ENCODE measurements at regions of chr2 and their contacts with region 1.

Region 1: GRCh38 chr2:101124643-101125366 is 26.4 kb downstream of the TBC1D8 start:
- DNase-seq: peak; percentile 86
- H3K4me3 Mint-ChIP-seq: peak overlapping the region; percentile 49
- H3K27ac Mint-ChIP-seq: peak overlapping the region; percentile 94
- H3K4me1 Mint-ChIP-seq: peaks cover 77% of the 10 kb centered on the region
- H3K27me3 Mint-ChIP-seq: no peaks in the 10 kb centered on the region
- CTCF ChIP-seq: no peak

Region 2: DNA sequence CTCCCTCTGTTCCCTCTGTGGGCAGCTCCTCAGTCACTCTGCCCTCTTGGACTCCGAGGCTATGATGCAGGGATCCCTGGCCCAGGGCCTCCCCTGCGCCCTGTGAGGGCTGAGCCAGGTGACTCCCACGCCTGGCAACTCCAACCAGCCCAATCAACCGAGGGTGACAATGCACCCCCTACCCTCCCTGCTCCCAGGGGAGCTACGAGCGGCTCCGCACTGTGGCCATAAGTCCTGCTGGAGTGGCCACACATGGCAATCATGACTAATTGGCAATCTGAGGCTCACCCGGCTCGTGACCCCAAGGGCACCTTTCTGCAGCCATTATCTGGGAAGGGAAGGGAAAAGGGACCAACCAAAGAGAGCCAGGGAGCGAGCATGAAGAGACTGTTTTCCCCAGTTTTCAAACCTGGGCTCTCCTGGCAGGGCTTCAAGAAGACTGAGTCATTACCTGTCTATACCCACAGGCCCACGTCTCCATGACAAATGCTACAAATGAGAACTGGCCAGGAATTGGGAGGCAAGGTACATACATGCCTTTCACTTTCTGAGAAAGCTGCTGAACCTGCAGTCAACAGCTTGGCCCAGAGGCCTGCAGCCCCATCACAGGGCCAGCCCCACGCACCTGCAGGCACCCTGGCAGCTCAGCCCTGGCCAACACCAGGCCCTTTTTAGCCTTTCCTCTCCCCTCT is 77.6 kb before region 1 on chr2:
- CTCF ChIA-PET with region 1: no interaction called
- intact Hi-C with region 1: loop called (anchors 1 kb)
- DNase-seq: peak; percentile 67
- H3K4me3 Mint-ChIP-seq: no peak overlapping the region
- H3K27ac Mint-ChIP-seq: no peak overlapping the region
- H3K4me1 Mint-ChIP-seq: peaks cover 14% of the 10 kb centered on the region
- H3K27me3 Mint-ChIP-seq: no peaks in the 10 kb centered on the region
- CTCF ChIP-seq: no peak

Region 3: DNA sequence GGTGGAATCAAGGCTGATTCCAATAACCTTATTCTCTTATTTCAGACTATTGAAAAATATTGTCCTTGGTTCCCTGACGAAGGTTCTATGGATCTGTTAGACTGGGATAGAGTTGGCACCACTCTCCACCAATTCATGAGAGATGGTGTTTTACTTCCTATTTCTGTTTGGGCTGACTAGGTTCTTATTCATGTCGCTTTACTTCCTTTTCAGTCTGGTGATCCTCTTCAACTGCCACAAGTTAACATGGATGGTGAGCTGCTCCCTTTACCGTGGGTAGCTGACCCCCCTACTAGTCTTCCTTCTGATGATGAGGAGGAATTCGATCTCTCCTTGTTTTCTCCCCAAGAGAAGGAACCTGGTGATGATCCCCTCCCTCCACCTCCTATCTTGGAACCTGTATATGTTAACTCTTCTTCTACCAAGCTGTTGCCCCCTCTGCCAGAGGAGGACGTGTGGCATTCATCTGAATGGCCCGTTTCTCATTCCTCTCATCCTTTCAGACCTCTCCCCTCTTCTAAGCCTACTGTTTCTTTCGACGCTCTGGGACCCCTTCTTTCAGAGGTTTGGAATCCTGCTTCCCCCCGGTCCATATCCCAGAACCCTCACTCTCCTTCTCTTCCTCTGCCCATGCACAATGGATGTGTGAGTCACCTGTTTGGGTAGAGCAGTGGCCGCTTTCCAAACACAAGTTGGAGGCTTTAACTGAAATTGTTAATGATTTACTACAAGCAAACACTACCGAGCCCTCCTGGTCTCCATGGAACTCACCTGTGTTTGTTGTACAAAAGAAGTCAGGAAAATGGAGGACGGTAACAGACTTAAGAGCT is 114.3 kb after region 1 on chr2:
- CTCF ChIA-PET with region 1: no interaction called
- intact Hi-C with region 1: no loop called
- DNase-seq: peak; percentile 77
- H3K4me3 Mint-ChIP-seq: peak overlapping the region; percentile 53
- H3K27ac Mint-ChIP-seq: peak overlapping the region; percentile 96
- H3K4me1 Mint-ChIP-seq: peaks cover 79% of the 10 kb centered on the region
- H3K27me3 Mint-ChIP-seq: no peaks in the 10 kb centered on the region
- CTCF ChIP-seq: no peak

Region 4: GRCh38 chr2:101486258-101486701 is 361.5 kb after region 1 on chr2:
- CTCF ChIA-PET with region 1: no interaction called
- intact Hi-C with region 1: no loop called
- DNase-seq: no peak
- H3K4me3 Mint-ChIP-seq: no peak overlapping the region
- H3K27ac Mint-ChIP-seq: no peak overlapping the region
- H3K4me1 Mint-ChIP-seq: peaks cover 12% of the 10 kb centered on the region
- H3K27me3 Mint-ChIP-seq: no peaks in the 10 kb centered on the region
- CTCF ChIP-seq: no peak

Measured in Calu3 (cell line).